ENCODE measurements at regions of chr11 and their contacts with region 1.

Region 1: DNA sequence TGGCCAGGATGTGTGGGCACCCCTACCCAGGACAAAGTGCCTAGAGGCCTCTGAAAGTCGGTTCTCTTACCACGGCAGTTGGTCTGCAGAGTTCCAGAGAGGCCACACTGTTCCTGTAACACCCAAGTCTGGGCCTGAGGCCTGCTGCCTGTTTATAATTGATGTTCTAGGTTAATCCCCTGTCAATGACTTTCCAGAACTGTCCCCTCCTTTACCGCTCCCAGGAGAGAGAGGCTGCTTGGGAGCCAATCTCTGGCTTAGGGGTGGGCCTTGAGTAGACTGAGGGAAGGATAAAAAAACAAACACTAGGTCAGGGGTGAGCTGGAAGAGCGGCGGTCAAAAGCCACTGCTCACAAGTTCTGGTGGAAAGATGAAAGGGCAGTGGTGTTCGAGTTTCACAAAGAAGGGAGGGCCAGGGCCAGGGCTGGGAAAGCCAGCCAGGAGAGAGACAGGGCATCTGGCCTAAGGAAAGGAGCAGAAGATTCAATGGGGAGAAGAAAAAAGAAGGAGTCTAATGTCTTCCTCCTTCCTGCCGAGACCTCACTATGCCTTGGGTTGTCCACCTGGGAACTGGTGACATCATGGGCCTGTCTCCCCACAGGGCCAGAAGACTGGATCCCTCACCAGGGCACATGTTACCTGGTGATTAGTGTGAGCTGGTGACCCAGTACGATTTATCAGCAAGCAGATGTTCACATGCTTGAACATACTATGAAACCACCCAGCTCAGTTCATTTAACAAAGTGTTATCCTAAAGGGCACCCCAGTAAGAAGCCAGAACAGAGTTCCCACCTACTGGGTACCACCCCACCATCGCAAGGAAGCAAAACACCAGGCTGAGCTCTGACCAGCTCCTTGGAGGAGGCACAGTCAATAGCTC is 50.2 kb downstream of the PC start:
- DNase-seq: no peak
- ATAC-seq: no peak
- H3K4me3 ChIP-seq: no peak overlapping the region
- H3K27ac ChIP-seq: peak overlapping the region in 1 of 2 experiments; percentile 83; a peak in 2 of 6 replicates
- H3K4me1 ChIP-seq: peaks cover 41% of the 10 kb centered on the region
- CTCF ChIP-seq: no peak
- EP300 ChIP-seq: no peak
- POLR2A ChIP-seq: no peak
- RAD21 ChIP-seq: no peak

Region 2: DNA sequence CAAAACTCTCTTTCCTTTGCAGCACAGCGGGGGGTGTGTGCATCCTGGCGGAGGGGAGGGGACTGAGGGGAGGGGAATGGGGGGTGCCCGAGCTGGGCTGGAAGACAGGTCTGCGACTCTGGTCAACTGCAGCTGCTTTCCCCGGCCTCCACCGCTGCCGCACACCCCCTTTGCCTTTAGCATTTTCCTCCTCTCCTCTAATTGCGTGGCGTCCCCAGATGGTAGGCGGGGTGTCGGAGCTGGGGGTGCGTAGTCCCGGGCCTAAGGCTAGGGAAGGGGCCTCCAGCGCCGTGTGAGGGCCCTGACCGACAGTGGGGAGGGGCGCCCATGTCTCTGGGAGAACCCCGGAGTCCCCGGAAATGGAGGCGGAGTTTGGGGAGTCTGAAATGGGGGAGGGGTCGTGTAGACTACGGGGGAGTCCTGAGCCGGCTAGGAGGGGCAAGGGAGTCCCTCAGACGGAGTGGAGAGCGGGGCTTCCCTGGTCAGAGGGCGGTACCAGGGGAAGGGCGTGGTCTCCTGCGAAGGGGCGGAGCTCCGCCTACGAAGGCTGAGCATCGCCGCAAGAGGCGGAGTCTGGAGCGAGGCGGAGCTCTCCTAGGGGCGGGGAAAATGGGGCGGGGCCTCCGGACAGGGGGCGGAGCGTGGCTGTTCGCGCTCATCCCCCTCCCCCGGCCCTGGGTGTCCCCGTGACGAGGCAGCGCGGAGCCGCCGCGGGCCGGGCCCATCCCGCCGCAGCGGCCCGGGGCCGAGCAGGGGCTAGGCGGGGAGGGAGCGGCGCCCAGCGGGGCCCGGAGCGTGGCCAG is 441.6 kb before region 1 on chr11 and contains the start of gene PELI3:
- CTCF ChIA-PET with region 1: no interaction called
- POLR2A ChIA-PET with region 1: no interaction called
- DNase-seq: peak; percentile 84 to 89
- ATAC-seq: peak; percentile 86 to 94
- H3K4me3 ChIP-seq: peak within 1 kb of the TSS; percentile 72
- H3K27ac ChIP-seq: peak within 1 kb of the TSS; percentile 76 to 95
- H3K4me1 ChIP-seq: peaks cover 10% of the 10 kb centered on the region
- CTCF ChIP-seq: no peak
- EP300 ChIP-seq: no peak
- POLR2A ChIP-seq: peak; percentile 17
- RAD21 ChIP-seq: no peak
- polyA plus RNA-seq, gene PELI3: 2.3 and 2.7 TPM in 2 replicates

Region 3: DNA sequence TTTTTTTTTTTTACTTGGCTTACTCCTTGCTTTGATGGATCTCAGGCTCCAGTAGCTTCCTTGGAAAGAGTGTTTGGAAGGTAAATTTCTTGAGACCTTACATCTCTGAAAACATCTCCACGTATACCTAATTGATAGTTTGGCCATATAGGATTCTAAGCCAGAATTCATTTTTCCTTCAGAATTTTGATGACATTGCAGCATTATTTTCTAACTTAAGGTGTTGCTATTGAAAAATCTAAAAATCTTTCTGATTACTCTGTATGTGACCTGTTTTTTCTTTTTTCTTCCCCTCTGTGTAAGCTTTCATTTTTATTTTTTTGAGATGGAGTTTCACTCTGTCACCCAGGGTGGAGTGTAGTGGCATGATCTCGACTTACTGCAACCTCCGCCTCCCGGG is 155.8 kb before region 1 on chr11:
- CTCF ChIA-PET with region 1: no interaction called
- POLR2A ChIA-PET with region 1: no interaction called
- DNase-seq: no peak
- ATAC-seq: no peak
- H3K4me3 ChIP-seq: no peak overlapping the region
- H3K27ac ChIP-seq: no peak overlapping the region
- H3K4me1 ChIP-seq: peaks cover 15% of the 10 kb centered on the region; the same call in 2 of the 3 replicates
- CTCF ChIP-seq: no peak
- EP300 ChIP-seq: no peak
- POLR2A ChIP-seq: no peak
- RAD21 ChIP-seq: no peak

Region 4: GRCh38 chr11:66891851-66892660 is 15.9 kb before region 1 on chr11:
- CTCF ChIA-PET with region 1: interaction called, 12 read pairs
- POLR2A ChIA-PET with region 1: no interaction called
- DNase-seq: peak; percentile 97 to 98
- ATAC-seq: peak; percentile 94 to 98
- H3K4me3 ChIP-seq: peak overlapping the region; percentile 8; the same call in 1 of the 3 replicates
- H3K27ac ChIP-seq: peak overlapping the region; percentile 95 to 97
- H3K4me1 ChIP-seq: peaks cover 65% of the 10 kb centered on the region
- CTCF ChIP-seq: no peak; the same call in 2 of the 3 replicates
- EP300 ChIP-seq: peak in 1 of 2 experiments; percentile 43; a peak in 1 of 5 replicates
- POLR2A ChIP-seq: no peak
- RAD21 ChIP-seq: peak; percentile 14 to 41; a peak in 3 of 5 replicates

Region 5: GRCh38 chr11:66950113-66950535 is 42.1 kb after region 1 on chr11:
- CTCF ChIA-PET with region 1: no interaction called
- POLR2A ChIA-PET with region 1: no interaction called
- DNase-seq: peak; percentile 93 to 97
- ATAC-seq: peak; percentile 90 to 98
- H3K4me3 ChIP-seq: no peak overlapping the region
- H3K27ac ChIP-seq: peak overlapping the region; percentile 88
- H3K4me1 ChIP-seq: peaks cover 55% of the 10 kb centered on the region
- CTCF ChIP-seq: no peak
- EP300 ChIP-seq: peak; percentile 30 to 37; a peak in 2 of 5 replicates
- POLR2A ChIP-seq: no peak
- RAD21 ChIP-seq: peak; percentile 2 to 42; a peak in 4 of 5 replicates

Region 6: DNA sequence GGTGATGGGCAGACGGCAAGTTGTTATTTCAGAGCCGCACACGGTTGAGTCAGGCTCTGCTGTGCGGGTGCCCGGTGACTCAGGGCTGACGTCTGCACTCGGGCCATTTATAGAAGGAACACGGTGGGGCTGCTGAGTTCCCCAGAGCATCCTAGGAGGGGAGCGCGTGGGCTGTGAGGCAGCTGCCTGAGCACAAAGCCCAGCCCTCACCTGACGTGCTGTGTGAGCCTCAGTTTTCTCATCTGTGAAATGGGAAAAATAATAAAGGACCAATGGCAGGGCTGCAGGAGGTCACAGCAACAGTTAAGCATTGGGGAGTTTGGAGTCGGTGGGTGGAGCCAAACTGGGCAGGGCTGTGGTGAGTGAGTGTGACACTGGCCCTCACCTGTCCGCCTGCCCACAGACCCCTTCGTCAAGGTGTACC is 137.4 kb after region 1 on chr11:
- CTCF ChIA-PET with region 1: no interaction called
- POLR2A ChIA-PET with region 1: no interaction called
- DNase-seq: peak; percentile 77 to 79
- ATAC-seq: peak; percentile 85 to 87
- H3K4me3 ChIP-seq: no peak overlapping the region
- H3K27ac ChIP-seq: peak overlapping the region; percentile 38 to 71; a peak in 4 of 6 replicates
- H3K4me1 ChIP-seq: peaks cover 12% of the 10 kb centered on the region
- CTCF ChIP-seq: 0 out of 3 replicates have a peak, but pooled peaks have one; percentile 12
- EP300 ChIP-seq: no peak
- POLR2A ChIP-seq: no peak
- RAD21 ChIP-seq: peak in 1 of 2 experiments; percentile 40; a peak in 3 of 5 replicates

Measured in A549 (cell line).